Cardiac septum (tissue), 1 donor: ENCODE measurements at regions of chr13 and their contacts with region 1.

Region 1: GRCh38 chr13:110138010-110138699 is 168.8 kb downstream of the COL4A1 start:
- DNase-seq: peak; percentile 91

Region 2: DNA sequence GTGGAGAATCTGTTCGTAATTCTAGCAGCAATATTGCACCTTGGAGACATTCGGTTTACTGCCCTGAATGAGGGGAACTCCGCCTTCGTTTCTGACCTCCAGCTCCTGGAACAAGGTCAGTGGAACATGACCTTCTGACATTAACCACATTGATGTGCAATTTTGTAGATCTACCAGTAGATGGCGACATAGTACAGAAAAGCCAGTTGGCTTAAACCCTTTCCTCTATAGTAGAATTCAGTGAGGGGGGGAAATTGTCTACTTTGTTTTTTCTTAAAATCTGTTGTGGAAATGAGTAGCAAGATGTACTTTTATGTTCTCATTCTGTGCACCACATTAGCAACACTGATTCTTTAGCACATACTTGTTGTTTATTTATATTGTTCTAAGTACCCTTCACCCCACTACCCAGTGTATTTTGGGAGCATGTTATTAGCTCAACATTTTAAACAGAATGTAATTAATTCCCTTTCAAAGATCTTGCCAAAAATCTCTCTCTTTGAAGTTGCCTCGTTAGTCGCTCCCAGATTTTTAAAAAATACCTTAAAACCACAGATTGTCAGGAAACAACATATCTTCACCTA is 1176.5 kb before region 1 on chr13:
- intact Hi-C with region 1: loop called (anchors 5 kb)
- DNase-seq: no peak

Region 3: DNA sequence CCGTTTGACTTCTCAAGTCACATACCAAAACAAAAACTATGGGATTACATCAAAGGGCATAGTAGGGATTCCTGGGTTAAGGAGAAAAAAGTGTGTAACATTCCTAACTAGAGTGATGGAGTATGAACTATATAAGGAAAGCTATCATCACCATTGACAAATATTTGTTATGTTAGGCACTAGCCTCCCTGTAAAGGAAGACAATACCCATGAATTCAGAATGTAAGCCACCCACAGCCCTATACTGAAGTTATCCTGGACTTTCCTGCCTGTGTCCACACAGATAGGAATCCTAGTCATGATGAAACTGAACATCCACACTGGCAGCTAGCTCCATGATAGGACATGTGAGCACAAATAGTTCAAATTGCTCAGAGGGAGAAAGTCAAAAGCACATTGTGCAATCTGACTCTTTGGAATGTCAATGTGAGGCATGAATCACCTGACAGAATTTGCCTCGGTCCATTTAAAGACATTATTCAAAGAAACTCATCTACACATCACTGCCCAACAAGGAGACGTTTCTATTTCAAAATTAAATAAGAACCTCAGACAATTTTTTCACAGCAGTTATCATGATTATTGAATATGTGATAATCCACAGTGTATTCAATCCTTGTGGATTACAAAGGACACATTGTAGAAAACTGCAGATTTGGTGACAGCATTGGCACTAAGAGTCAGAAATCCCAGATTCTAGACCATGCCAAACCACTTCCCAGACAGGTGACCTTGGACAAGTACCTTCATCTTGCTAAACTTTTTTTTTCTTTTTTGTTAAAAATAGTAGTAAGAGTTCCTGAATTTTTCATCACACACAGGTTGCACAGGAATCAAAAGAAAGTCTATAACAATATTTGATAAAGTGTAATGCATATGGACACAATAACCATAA is 881.0 kb before region 1 on chr13:
- intact Hi-C with region 1: loop called (anchors 10 kb)
- DNase-seq: no peak

Region 4: DNA sequence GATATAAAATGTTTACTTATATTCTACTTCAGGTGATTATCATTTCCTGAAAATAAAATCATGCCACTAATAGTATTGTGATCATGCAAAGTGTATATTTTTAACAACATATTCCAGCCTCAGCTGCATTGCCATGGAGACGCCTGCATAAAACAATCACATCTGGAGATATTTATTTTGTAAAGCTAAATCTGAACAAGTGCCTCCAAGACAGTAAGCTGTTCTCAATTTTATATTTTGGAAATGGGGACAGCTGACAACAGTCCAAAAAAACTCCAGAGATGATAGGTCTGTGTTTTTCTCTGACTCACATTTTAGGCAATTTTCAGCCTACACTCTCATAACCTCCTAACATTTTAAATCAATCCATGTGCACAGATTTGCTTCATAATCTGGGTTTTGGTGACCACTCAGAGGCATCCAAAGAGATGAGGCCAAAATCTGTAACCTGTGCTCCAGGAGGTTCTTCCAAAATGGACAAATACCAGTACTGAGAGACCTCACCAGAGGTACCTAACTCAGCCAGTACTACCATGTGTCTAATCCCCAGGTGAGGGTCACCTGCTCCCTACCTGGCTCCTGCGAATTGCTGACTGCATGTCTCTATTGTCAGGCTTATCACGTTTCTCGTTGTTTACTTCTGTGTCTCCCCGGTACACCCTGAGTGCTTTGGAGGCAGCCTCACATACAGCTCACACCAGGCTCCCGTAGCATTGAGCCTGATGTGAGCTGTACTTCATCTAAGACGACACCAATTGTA is 106.1 kb after region 1 on chr13:
- intact Hi-C with region 1: no loop called
- DNase-seq: no peak